A673 (cell line): ENCODE measurements at regions of chr15 and their contacts with region 1.

Region 1: DNA sequence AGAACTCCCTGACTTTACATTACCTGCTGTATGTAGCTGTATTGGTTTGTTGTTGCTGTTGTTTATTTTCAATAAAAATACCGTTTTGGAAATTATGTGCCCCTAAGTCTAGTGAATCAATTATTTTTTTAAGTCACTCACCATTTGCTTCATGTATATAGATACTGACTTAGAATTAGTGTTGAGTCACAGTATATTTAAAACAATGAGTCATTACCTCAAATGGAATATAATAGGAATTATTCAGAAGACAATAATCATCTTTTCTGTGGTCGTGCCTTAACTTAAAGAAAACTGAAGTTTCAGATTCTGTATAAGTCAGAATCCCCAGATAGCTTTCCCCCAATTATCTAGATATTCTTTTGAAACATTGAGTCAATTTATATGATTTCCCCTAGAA is 21.0 kb upstream of the ALDH1A2 start:
- DNase-seq: no peak
- H3K4me3 ChIP-seq: no peak overlapping the region
- H3K27ac ChIP-seq: no peak overlapping the region
- H3K4me1 ChIP-seq: no peaks in the 10 kb centered on the region
- H3K27me3 ChIP-seq: peaks cover 5% of the 10 kb centered on the region
- CTCF ChIP-seq: no peak

Region 2: DNA sequence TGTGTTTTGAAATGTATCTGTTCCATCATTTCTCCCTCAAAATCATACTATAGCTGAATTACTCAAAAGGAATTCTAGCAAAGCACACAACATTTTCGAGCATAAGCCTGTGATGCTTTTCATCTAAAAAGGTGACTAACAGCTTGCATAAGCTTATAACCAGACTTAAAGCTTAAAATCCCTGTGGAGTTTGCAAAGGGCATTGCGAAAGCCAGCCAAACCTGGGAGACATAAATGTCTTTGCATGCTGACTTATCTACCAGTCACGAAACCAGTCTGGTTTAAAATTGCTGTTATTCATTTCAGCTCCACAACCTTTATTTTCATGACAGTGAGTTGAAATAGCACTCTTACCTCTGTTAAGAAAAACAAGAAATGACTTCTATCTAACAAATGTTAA is 309.7 kb after region 1 on chr15:
- CTCF ChIA-PET with region 1: no interaction called
- POLR2A ChIA-PET with region 1: no interaction called
- intact Hi-C with region 1: no loop called
- DNase-seq: peak; percentile 30
- H3K4me3 ChIP-seq: no peak overlapping the region
- H3K27ac ChIP-seq: no peak overlapping the region
- H3K4me1 ChIP-seq: no peaks in the 10 kb centered on the region
- H3K27me3 ChIP-seq: no peaks in the 10 kb centered on the region
- CTCF ChIP-seq: no peak

Region 3: GRCh38 chr15:59138243-59138642 is 1051.8 kb after region 1 on chr15:
- CTCF ChIA-PET with region 1: interaction called, 11 read pairs
- POLR2A ChIA-PET with region 1: no interaction called
- intact Hi-C with region 1: no loop called
- DNase-seq: peak; percentile 53
- H3K4me3 ChIP-seq: no peak overlapping the region
- H3K27ac ChIP-seq: no peak overlapping the region
- H3K4me1 ChIP-seq: no peaks in the 10 kb centered on the region
- H3K27me3 ChIP-seq: no peaks in the 10 kb centered on the region
- CTCF ChIP-seq: peak; percentile 60